ENCODE measurements at regions of chr16 and their contacts with region 1.

Region 1: DNA sequence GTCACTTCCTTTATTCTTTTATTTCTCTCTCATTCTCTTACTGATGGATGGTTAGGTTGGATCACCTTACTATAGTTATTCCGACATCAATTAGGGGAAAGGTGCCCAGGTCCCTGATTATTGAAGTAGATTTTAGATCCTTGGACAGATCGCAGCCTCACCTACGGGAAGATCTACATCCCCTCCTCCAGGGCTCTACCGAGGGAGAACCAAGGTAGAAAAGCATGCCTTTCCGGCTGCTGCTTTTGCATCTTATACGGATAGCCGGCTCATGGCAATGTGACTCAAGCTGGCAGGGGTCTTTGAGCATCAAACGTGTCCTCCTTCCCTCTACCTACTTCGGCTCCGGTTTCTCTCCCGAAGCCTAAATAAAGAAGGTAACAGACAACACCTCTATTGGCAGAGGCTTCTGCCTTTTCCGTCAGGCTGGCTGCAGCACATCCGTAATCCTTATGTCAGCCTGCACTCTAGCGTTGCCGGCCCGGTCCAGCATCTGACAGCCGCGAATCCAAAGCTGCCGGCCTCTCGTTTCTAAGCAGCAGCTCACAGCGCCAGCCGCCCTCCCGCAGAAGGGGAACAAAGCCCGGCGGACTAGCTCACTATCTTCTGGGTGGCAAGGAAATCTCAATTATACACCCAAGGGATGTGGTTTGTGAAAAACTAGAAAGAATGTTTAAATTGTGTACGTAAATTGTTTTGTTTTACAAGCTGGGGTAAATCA is 46.9 kb downstream of the IRX6 start:
- H3K4me3 Mint-ChIP-seq: no peak overlapping the region
- H3K27ac Mint-ChIP-seq: no peak overlapping the region
- H3K4me1 Mint-ChIP-seq: peaks cover 12% of the 10 kb centered on the region
- H3K27me3 Mint-ChIP-seq: peaks cover 58% of the 10 kb centered on the region

Region 2: GRCh38 chr16:55444754-55445485 is 74.0 kb after region 1 on chr16:
- intact Hi-C with region 1: loop called (anchors 5 kb)
- H3K4me3 Mint-ChIP-seq: peak overlapping the region; percentile 62
- H3K27ac Mint-ChIP-seq: peak overlapping the region; percentile 88
- H3K4me1 Mint-ChIP-seq: peaks cover 50% of the 10 kb centered on the region
- H3K27me3 Mint-ChIP-seq: no peaks in the 10 kb centered on the region

Measured in dendritic cell treated with granulocyte-macrophage colony-stimulating factor and Interleukin-4, amounts not matched to agents 40 ng/mL and 50 ng/mL, for 4 days (primary cell).